ENCODE measurements at regions of chr3 and their contacts with region 1.

Region 1: GRCh38 chr3:46629551-46630517 is 17.5 kb downstream of the FAM240A start:
- DNase-seq: peak; percentile 83 to 87 (median 86)
- ATAC-seq: peak; percentile 96
- H3K4me3 ChIP-seq: no peak overlapping the region
- H3K27ac ChIP-seq: peak overlapping the region in 2 of 4 donors; percentile 32 to 49
- H3K4me1 ChIP-seq: peaks cover 8% of the 10 kb centered on the region
- H3K27me3 ChIP-seq: no peaks in the 10 kb centered on the region
- CTCF ChIP-seq: peak; percentile 95 to 99 (median 99)
- POLR2A ChIP-seq: peak in 1 of 3 donors; percentile 26

Region 2: GRCh38 chr3:45656575-45657363 is 973.1 kb before region 1 on chr3:
- intact Hi-C with region 1: no loop called
- DNase-seq: peak; percentile 89 to 95 (median 94)
- ATAC-seq: peak; percentile 88
- H3K4me3 ChIP-seq: no peak overlapping the region
- H3K27ac ChIP-seq: peak overlapping the region in 2 of 4 donors; percentile 3 to 29
- H3K4me1 ChIP-seq: peaks cover 4% of the 10 kb centered on the region
- H3K27me3 ChIP-seq: no peaks in the 10 kb centered on the region
- CTCF ChIP-seq: peak; percentile 88 to 99 (median 98)
- POLR2A ChIP-seq: no peak

Region 3: GRCh38 chr3:46489875-46490274 is 140.0 kb before region 1 on chr3:
- intact Hi-C with region 1: loop called (anchors 5 kb)
- DNase-seq: no peak
- ATAC-seq: no peak
- H3K4me3 ChIP-seq: no peak overlapping the region
- H3K27ac ChIP-seq: no peak overlapping the region
- H3K4me1 ChIP-seq: peaks cover 39% of the 10 kb centered on the region
- H3K27me3 ChIP-seq: no peaks in the 10 kb centered on the region
- CTCF ChIP-seq: no peak
- POLR2A ChIP-seq: no peak

Region 4: GRCh38 chr3:46737329-46737731 is 107.5 kb after region 1 on chr3:
- intact Hi-C with region 1: no loop called
- DNase-seq: peak in 3 of 4 donors; percentile 31 to 43 (median 31)
- ATAC-seq: peak; percentile 40
- H3K4me3 ChIP-seq: no peak overlapping the region
- H3K27ac ChIP-seq: no peak overlapping the region
- H3K4me1 ChIP-seq: peaks cover 4% of the 10 kb centered on the region
- H3K27me3 ChIP-seq: no peaks in the 10 kb centered on the region
- CTCF ChIP-seq: no peak
- POLR2A ChIP-seq: no peak

Measured in body of pancreas (tissue), 4 donors.